Endothelial cell of umbilical vein (primary cell): ENCODE measurements at regions of chr6 and their contacts with region 1.

Region 1: DNA sequence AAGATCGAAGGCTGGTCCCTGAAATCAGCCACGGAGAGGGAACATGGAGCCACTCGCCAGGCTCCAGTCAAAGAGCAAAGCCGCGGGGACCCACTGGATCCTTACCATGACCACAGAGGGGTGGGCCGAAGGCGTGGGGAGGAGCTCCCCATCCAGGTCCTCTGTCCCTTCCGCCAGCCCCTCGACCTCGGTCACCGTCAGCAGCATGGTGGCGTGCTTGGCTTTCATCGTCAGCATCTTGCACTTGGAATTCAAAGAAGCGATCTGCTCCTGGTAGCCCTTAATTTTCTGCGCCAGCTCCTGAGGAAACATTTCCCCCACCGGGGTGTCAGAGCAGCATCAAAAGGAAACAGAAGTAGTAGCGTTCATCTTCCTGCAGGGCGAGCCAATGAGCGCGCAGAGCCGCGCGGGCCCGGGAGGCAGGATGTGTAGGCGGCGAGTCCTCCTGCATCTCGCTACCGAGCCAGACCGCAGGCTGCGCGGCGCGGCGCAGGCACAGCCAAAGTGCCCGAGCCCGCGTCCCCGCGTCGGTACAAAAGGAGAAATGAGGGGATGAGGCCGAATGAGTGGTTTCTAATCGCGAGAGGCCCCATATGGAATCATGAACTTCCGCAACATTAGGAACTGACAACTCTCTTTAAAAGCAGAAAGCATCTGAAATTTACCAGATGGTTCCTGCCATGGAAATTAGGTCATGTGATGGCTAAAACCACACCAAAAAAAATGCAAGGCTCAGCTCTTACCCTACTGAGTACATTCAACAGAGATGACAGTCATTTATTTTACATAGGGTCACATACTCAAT is 335.2 kb downstream of the SYNE1 start:
- DNase-seq: peak; percentile 93
- H3K4me3 ChIP-seq: peak overlapping the region; percentile 76 to 97 (median 93)
- H3K27ac ChIP-seq: peak overlapping the region; percentile 84
- H3K4me1 ChIP-seq: peaks cover 22% of the 10 kb centered on the region
- H3K27me3 ChIP-seq: no peaks in the 10 kb centered on the region
- CTCF ChIP-seq: peak; percentile 57 to 70
- POLR2A ChIP-seq: peak; percentile 86

Region 2: DNA sequence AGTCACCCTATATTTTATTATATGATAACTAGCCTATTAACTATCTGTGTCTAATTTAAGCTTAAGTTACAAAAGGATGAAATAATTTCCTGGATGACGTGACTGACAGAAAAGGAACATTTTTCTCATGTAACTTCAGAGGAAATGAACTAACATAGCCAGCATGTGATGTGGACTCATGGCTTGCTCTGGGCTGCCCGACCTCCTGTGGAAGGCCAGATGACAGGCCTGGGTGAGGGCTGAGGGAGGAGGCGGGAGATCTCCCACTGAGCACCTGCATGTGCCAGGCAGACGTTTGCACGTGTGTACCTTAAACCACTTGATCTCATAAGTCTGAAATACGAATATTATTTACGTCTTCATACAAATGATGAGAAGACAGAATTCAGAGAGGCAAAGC is 14.1 kb after region 1 on chr6:
- CTCF ChIA-PET with region 1: interaction called, 26 read pairs
- POLR2A ChIA-PET with region 1: interaction called, 5 read pairs
- dilution Hi-C with region 1: no loop called
- intact Hi-C with region 1: loop called (anchors 1 kb)
- DNase-seq: peak; percentile 93
- H3K4me3 ChIP-seq: no peak overlapping the region
- H3K27ac ChIP-seq: peak overlapping the region; percentile 87
- H3K4me1 ChIP-seq: peaks cover 32% of the 10 kb centered on the region
- H3K27me3 ChIP-seq: no peaks in the 10 kb centered on the region
- CTCF ChIP-seq: no peak
- POLR2A ChIP-seq: peak; percentile 47

Region 3: GRCh38 chr6:152338335-152339125 is 36.6 kb after region 1 on chr6:
- CTCF ChIA-PET with region 1: interaction called, 152 read pairs
- POLR2A ChIA-PET with region 1: interaction called, 5 read pairs
- dilution Hi-C with region 1: no loop called
- intact Hi-C with region 1: loop called (anchors 1 kb)
- DNase-seq: peak; percentile 68
- H3K4me3 ChIP-seq: no peak overlapping the region
- H3K27ac ChIP-seq: no peak overlapping the region
- H3K4me1 ChIP-seq: no peaks in the 10 kb centered on the region
- H3K27me3 ChIP-seq: no peaks in the 10 kb centered on the region
- CTCF ChIP-seq: peak; percentile 87 to 89
- POLR2A ChIP-seq: no peak

Region 4: GRCh38 chr6:152380993-152381898 is 79.3 kb after region 1 on chr6:
- CTCF ChIA-PET with region 1: no interaction called
- POLR2A ChIA-PET with region 1: no interaction called
- dilution Hi-C with region 1: no loop called
- intact Hi-C with region 1: loop called (anchors 1 kb)
- DNase-seq: peak; percentile 95
- H3K4me3 ChIP-seq: peak overlapping the region; percentile 50 to 84 (median 53)
- H3K27ac ChIP-seq: peak overlapping the region; percentile 96
- H3K4me1 ChIP-seq: peaks cover 23% of the 10 kb centered on the region
- H3K27me3 ChIP-seq: no peaks in the 10 kb centered on the region
- CTCF ChIP-seq: no peak
- POLR2A ChIP-seq: no peak

Region 5: DNA sequence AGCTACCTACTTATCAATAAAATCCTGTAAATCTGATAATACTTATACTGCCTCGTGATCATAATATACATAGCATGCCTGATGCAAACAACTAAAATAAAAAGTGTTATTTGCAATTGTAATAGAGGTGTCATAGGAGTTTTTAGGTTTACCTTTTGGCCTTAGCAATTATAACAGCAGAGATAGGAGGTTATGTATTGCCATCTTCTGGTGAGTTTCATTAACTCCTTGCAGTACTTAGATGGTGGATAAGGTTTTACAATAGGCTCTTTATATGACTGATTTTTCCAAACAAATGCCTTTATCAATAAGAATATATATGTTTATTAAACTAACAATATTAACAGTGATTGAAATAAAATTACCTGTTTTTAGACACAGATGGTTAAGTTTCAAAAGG is 367.9 kb after region 1 on chr6:
- CTCF ChIA-PET with region 1: interaction called, 15 read pairs
- POLR2A ChIA-PET with region 1: no interaction called
- dilution Hi-C with region 1: no loop called
- intact Hi-C with region 1: loop called (anchors 2 kb)
- DNase-seq: peak; percentile 67
- H3K4me3 ChIP-seq: no peak overlapping the region
- H3K27ac ChIP-seq: no peak overlapping the region
- H3K4me1 ChIP-seq: peaks cover 44% of the 10 kb centered on the region
- H3K27me3 ChIP-seq: no peaks in the 10 kb centered on the region
- CTCF ChIP-seq: peak; percentile 8 to 22
- POLR2A ChIP-seq: no peak

Region 6: GRCh38 chr6:152948150-152948768 is 646.3 kb after region 1 on chr6:
- CTCF ChIA-PET with region 1: interaction called, 6 read pairs
- POLR2A ChIA-PET with region 1: no interaction called
- dilution Hi-C with region 1: no loop called
- intact Hi-C with region 1: loop called (anchors 10 kb)
- DNase-seq: peak; percentile 64
- H3K4me3 ChIP-seq: no peak overlapping the region
- H3K27ac ChIP-seq: no peak overlapping the region
- H3K4me1 ChIP-seq: peaks cover 11% of the 10 kb centered on the region
- H3K27me3 ChIP-seq: no peaks in the 10 kb centered on the region
- CTCF ChIP-seq: peak; percentile 41 to 46
- POLR2A ChIP-seq: no peak